ENCODE measurements at regions of chr1 and their contacts with region 1.

Region 1: GRCh38 chr1:167708940-167709389 is 12.8 kb upstream of the MPZL1 start:
- DNase-seq: no peak
- ATAC-seq: no peak
- H3K4me3 ChIP-seq: no peak overlapping the region
- H3K27ac ChIP-seq: no peak overlapping the region
- H3K4me1 ChIP-seq: peaks cover 19% of the 10 kb centered on the region
- H3K27me3 ChIP-seq: peaks cover 0 to 21% of the 10 kb centered on the region in 2 experiments; a peak in 2 of 5 replicates
- CTCF ChIP-seq: no peak
- EP300 ChIP-seq: no peak
- POLR2A ChIP-seq: no peak
- RAD21 ChIP-seq: no peak

Region 2: DNA sequence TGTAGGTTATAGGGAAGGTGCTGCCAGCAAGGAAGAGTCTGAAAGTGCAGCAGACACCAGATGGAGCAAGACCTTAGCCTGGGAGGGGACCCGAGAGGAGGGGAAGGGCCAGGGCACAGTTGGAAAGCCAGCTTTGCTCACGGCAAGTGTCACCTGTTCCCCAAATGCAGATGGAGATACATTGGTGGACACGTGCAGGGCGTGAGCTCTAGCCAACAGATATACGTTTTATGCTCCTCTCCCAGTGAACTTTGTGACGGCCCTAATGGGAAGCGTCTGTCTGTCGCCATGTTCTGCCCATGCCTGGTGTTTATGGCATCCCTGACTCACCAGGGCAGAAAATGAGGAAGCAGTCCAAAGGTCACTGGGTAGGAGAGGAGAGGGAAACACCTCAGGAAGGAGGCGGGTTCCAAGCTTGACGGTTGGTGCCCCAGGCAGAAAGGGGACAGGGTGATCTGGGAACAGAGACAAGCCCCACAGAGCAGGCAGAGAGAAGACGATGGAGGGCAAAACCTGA is 626.4 kb before region 1 on chr1:
- CTCF ChIA-PET with region 1: no interaction called
- POLR2A ChIA-PET with region 1: no interaction called
- in situ Hi-C with region 1: no loop called
- intact Hi-C with region 1: loop called (anchors 10 kb)
- DNase-seq: peak; percentile 73
- ATAC-seq: peak; percentile 87
- H3K4me3 ChIP-seq: peak overlapping the region in 1 of 3 experiments; percentile 53; a peak in 2 of 6 replicates
- H3K27ac ChIP-seq: no peak overlapping the region
- H3K4me1 ChIP-seq: peaks cover 14% of the 10 kb centered on the region
- H3K27me3 ChIP-seq: peaks cover 4 to 24% of the 10 kb centered on the region in 2 experiments; a peak in 3 of 5 replicates
- CTCF ChIP-seq: peak; percentile 16; the same call in 1 of the 2 replicates
- EP300 ChIP-seq: peak in 1 of 2 experiments; percentile 27; a peak in 1 of 4 replicates
- POLR2A ChIP-seq: no peak
- RAD21 ChIP-seq: no peak

Region 3: GRCh38 chr1:167227934-167228378 is 481.0 kb before region 1 on chr1:
- CTCF ChIA-PET with region 1: no interaction called
- POLR2A ChIA-PET with region 1: no interaction called
- in situ Hi-C with region 1: no loop called
- intact Hi-C with region 1: no loop called
- DNase-seq: peak; percentile 35
- ATAC-seq: no peak
- H3K4me3 ChIP-seq: no peak overlapping the region
- H3K27ac ChIP-seq: no peak overlapping the region
- H3K4me1 ChIP-seq: peaks cover 38% of the 10 kb centered on the region
- H3K27me3 ChIP-seq: no peaks in the 10 kb centered on the region
- CTCF ChIP-seq: no peak
- EP300 ChIP-seq: no peak
- POLR2A ChIP-seq: no peak
- RAD21 ChIP-seq: no peak

Region 4: DNA sequence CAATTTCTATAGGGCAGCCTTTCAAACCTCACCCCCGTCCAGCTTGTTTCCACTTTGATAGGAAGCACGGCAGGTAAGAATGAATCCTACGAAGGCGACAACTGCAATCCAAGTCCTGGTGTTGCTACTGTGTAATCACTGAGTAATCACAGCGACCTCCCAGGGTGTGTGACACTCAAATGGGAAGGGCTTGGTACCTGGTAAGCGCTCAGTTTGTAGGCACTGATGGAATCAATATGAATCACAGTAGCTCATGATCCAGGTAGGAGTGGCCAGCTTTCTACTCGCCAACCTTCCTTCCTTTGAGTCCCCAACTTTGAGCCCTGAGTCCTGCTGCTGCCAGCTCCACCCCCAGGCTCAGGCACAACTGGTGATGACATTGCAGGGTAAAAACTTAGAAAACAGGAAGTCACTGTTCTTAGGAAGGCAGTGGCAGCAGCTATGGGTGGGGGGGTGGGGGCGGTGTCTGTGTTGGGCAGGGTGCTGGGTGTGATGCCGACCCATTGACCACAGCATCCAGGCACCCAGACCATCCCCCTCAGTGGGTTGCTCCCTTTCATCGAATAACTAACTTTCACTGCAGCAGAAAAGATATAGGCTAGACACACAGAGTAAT is 261.3 kb before region 1 on chr1:
- CTCF ChIA-PET with region 1: no interaction called
- POLR2A ChIA-PET with region 1: no interaction called
- in situ Hi-C with region 1: no loop called
- intact Hi-C with region 1: no loop called
- DNase-seq: no peak
- ATAC-seq: peak; percentile 54
- H3K4me3 ChIP-seq: peak overlapping the region in 1 of 3 experiments; percentile 31; a peak in 1 of 6 replicates
- H3K27ac ChIP-seq: no peak overlapping the region
- H3K4me1 ChIP-seq: peaks cover 2% of the 10 kb centered on the region; the same call in 1 of the 2 replicates
- H3K27me3 ChIP-seq: peaks cover 0 to 15% of the 10 kb centered on the region in 2 experiments; a peak in 2 of 5 replicates
- CTCF ChIP-seq: no peak
- EP300 ChIP-seq: no peak
- POLR2A ChIP-seq: no peak
- RAD21 ChIP-seq: no peak